ENCODE measurements at regions of chr9 and their contacts with region 1.

Region 1: DNA sequence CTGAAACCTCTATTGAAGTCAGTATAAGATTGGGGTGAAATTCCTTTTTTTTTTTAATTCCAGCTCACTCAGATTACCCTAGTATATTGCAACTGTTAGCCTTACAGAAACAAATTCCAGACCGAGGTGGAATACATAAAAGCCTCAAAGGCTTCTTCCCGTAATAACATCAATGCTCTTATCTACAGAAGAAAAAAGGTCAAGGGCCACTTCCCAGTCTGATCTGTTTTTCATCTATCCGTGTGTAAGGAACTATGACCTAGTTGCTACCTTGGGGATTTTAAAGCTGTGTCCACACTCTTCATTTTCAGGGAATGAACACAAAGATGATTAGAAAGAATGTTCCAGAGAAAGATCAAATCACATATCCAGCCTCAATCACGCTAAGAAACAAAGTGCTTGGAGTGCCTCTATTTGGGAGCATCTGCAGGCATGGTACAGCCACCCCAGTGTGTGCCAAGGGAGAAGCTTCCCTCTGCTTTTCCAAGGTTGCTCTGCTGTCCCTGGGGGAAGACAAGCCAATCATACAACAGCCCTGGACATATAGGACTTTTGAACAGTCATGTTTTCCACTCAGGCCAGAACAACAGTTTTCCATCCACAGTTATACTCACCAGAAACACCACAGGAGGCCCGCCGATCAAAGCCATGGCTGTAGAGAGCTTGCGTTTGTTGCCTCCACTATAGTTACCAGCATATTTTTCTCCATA is 23.5 kb downstream of the NIPSNAP3B start:
- DNase-seq: no peak
- H3K4me3 ChIP-seq: no peak overlapping the region
- H3K27ac ChIP-seq: no peak overlapping the region
- H3K4me1 ChIP-seq: no peaks in the 10 kb centered on the region
- H3K27me3 ChIP-seq: no peaks in the 10 kb centered on the region
- CTCF ChIP-seq: no peak

Region 2: DNA sequence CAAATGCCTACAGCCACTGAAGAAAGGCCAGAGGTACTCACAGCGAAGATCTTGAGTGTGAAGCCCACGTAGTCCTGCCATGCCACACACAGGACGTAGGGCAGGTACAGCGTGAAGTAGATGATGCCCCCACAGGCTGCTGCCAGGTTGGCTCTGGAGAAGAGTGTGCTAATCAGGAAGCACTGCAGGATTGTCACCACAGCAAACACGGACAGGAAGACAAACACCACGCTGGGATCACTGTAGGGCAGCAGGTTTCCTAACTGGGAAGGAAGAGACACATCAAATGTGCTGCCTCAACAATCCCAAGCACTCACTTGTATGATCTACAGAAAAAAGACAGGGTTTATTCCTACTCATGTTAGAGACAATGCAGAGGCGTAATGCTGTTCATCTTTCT is 39.4 kb after region 1 on chr9:
- CTCF ChIA-PET with region 1: no interaction called
- dilution Hi-C with region 1: loop called (anchors 5 kb)
- in situ Hi-C with region 1: no loop called
- intact Hi-C with region 1: no loop called
- DNase-seq: no peak
- H3K4me3 ChIP-seq: no peak overlapping the region
- H3K27ac ChIP-seq: no peak overlapping the region
- H3K4me1 ChIP-seq: peaks cover 4% of the 10 kb centered on the region
- H3K27me3 ChIP-seq: no peaks in the 10 kb centered on the region
- CTCF ChIP-seq: no peak

Measured in mammary epithelial cell (primary cell).